IMR-90 (cell line): ENCODE measurements at regions of chr15 and their contacts with region 1.

Region 1: DNA sequence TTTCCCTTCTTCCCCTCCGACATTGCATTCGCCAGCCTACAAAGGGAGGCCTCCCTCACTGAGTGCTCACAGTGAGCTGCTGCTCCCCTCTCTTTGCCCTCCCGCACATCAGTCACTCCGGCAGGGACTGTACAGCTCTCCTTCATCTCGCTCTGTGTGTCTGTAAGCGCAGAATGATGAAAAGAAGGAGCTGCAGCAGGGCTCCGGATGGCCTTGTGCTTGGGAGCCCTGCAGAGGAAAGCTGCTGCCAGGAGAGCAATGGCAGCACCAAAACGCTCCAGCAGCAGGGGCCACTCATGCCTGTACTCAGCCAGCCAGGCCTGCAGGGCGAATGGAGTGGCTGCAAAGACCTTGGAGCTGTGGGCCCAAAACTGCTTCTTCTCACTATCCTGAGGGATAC is 107.0 kb upstream of the NSMCE3 start:
- DNase-seq: no peak
- ATAC-seq: no peak
- H3K4me3 ChIP-seq: no peak overlapping the region
- H3K27ac ChIP-seq: no peak overlapping the region
- H3K4me1 ChIP-seq: no peaks in the 10 kb centered on the region
- H3K27me3 ChIP-seq: peaks cover 2% of the 10 kb centered on the region; the same call in 1 of the 2 replicates
- CTCF ChIP-seq: no peak
- POLR2A ChIP-seq: no peak
- RAD21 ChIP-seq: no peak

Region 2: GRCh38 chr15:29410338-29410737 is 33.7 kb after region 1 on chr15:
- CTCF ChIA-PET with region 1: no interaction called
- POLR2A ChIA-PET with region 1: no interaction called
- dilution Hi-C with region 1: no loop called
- in situ Hi-C with region 1: no loop called
- intact Hi-C with region 1: loop called (anchors 5 kb)
- DNase-seq: peak; percentile 10
- ATAC-seq: peak; percentile 79
- H3K4me3 ChIP-seq: no peak overlapping the region
- H3K27ac ChIP-seq: no peak overlapping the region
- H3K4me1 ChIP-seq: no peaks in the 10 kb centered on the region
- H3K27me3 ChIP-seq: no peaks in the 10 kb centered on the region
- CTCF ChIP-seq: no peak
- POLR2A ChIP-seq: no peak
- RAD21 ChIP-seq: no peak

Region 3: DNA sequence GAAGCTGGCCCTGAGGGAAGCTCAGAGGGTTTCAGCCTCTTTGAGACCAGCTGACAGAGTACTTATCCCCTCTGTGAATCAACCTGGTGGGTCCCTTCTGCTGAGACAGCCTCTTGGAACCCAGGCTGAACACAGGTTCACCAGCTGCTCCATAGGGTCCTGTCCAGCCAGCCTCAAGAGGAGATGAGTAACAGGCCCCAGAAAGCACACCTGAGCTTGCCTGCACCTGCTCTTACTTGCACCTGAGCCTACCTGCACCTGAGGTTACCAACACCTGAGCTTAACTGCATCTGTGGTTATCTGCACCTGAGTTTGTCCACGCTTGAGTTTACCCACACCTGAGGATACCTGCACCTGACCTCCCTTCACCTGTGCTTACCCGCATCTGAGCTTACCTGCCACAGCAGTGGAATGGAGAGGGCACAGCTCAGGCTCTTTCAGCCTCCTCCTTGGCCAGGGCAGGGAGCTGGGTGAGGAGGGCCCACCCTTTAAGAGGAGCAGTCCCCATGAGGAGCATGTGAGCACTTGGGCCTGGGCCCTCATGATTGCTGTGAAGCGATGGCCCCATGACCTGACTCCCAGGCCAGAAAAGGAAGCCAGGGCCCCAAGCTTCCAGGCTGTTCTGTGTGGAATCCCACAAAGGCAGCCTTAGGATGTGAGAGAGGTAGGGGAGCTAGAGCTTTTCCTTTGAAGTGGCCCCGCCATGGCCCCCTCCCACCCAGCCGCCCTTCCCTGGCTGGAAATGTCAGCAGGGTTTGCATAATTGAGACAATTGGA is 1724.9 kb after region 1 on chr15 and contains the start of gene TRPM1:
- CTCF ChIA-PET with region 1: no interaction called
- POLR2A ChIA-PET with region 1: no interaction called
- dilution Hi-C with region 1: no loop called
- in situ Hi-C with region 1: no loop called
- intact Hi-C with region 1: no loop called
- DNase-seq: no peak
- ATAC-seq: no peak
- H3K4me3 ChIP-seq: no peak within 1 kb of the TSS
- H3K27ac ChIP-seq: no peak within 1 kb of the TSS
- H3K4me1 ChIP-seq: no peaks in the 10 kb centered on the region
- H3K27me3 ChIP-seq: peaks cover 21% of the 10 kb centered on the region
- CTCF ChIP-seq: no peak
- POLR2A ChIP-seq: no peak
- RAD21 ChIP-seq: no peak
- total RNA-seq, gene TRPM1: 0.28 TPM in 1 of 2 replicates, not detected in the other